Aorta (tissue), 5 donors: ENCODE measurements at regions of chr3 and their contacts with region 1.

Region 1: GRCh38 chr3:141311496-141312353 is 56.6 kb upstream of the ZBTB38 start:
- DNase-seq: peak; percentile 99
- ATAC-seq: peak; percentile 99
- H3K4me3 ChIP-seq: peak overlapping the region; percentile 20 to 27
- H3K27ac ChIP-seq: peak overlapping the region in 1 of 2 donors; percentile 49
- H3K4me1 ChIP-seq: no peaks in the 10 kb centered on the region
- H3K27me3 ChIP-seq: no peaks in the 10 kb centered on the region

Region 2: GRCh38 chr3:141231101-141231935 is 80.4 kb before region 1 on chr3 and contains the start of gene PXYLP1:
- intact Hi-C with region 1: loop called in 1 of 2 experiments (anchors 5 kb)
- DNase-seq: peak; percentile 96 to 98
- ATAC-seq: peak; percentile 98
- H3K4me3 ChIP-seq: peak within 1 kb of the TSS; percentile 58 to 84
- H3K27ac ChIP-seq: peak within 1 kb of the TSS; percentile 45 to 69
- H3K4me1 ChIP-seq: no peaks in the 10 kb centered on the region
- H3K27me3 ChIP-seq: no peaks in the 10 kb centered on the region
- total RNA-seq, gene PXYLP1: 19.2 to 29.6 TPM

Region 3: GRCh38 chr3:141275026-141275910 is 36.5 kb before region 1 on chr3:
- intact Hi-C with region 1: no loop called
- DNase-seq: no peak
- ATAC-seq: no peak
- H3K4me3 ChIP-seq: no peak overlapping the region
- H3K27ac ChIP-seq: no peak overlapping the region
- H3K4me1 ChIP-seq: no peaks in the 10 kb centered on the region
- H3K27me3 ChIP-seq: no peaks in the 10 kb centered on the region

Region 4: DNA sequence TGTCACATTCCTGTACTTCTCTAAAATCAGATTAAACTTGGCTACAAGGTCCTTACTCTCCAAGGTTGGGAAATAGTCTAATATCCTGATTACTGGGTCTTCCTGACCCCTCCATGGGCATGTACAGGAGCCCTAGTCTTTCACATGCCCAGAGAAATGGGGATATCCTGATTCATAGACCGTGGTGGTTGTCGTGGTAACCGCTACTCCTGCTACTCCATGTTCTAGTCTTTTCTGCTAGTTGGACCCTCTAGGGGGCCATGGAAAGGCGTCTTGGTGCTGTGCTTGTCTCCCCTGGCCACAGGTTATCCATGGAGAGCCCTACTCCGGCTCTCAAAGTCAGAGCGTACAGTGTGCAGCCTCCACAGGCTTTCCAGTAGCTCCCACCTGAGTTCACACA is 43.5 kb after region 1 on chr3:
- intact Hi-C with region 1: loop called (anchors 5 kb)
- DNase-seq: no peak
- ATAC-seq: no peak
- H3K4me3 ChIP-seq: no peak overlapping the region
- H3K27ac ChIP-seq: no peak overlapping the region
- H3K4me1 ChIP-seq: no peaks in the 10 kb centered on the region
- H3K27me3 ChIP-seq: no peaks in the 10 kb centered on the region

Region 5: DNA sequence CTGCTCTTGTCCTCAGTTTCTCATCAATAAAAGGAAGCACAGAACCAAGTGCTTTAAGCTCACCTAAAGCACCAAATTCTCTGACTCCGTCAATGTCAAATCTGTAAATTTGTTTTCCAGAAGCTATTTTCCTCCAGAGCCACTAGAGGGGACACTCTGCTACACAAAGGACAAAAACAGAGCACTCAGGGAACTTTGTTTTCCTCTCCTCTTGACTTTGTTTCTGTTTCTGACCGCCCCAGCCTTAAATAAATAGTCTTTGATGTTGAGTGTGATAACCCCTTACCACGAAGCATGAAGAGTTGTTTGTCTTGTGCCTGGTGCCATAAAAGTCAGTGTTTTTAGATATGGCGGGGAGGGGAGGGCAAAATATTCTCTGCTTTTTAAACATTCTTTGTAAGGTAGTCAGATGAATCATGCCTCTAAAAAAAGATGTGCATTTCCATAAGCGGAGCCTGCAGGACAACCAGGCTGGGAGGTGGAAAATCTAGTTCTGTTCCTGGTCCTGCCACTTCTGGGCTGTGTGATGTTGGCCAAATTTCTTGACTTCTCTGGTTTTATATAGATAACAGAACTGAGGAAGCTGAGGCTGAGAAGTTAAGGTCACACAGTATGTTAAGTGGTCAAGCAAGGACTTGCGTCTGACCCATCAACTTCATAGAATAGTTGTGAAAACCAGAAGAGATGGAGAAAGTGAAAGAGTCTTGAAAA is 49.3 kb after region 1 on chr3:
- intact Hi-C with region 1: loop called (anchors 5 kb)
- DNase-seq: peak in 1 of 2 donors; percentile 49
- ATAC-seq: peak; percentile 90
- H3K4me3 ChIP-seq: no peak overlapping the region
- H3K27ac ChIP-seq: peak overlapping the region; percentile 59 to 73
- H3K4me1 ChIP-seq: peaks cover 0 to 4% of the 10 kb centered on the region in 2 donors
- H3K27me3 ChIP-seq: no peaks in the 10 kb centered on the region

Region 6: GRCh38 chr3:141452036-141452435 is 140.3 kb after region 1 on chr3:
- intact Hi-C with region 1: loop called (anchors 2 to 5 kb)
- DNase-seq: no peak
- ATAC-seq: peak; percentile 81
- H3K4me3 ChIP-seq: no peak overlapping the region
- H3K27ac ChIP-seq: peak overlapping the region in 1 of 2 donors; percentile 37
- H3K4me1 ChIP-seq: peaks cover 0 to 3% of the 10 kb centered on the region in 2 donors
- H3K27me3 ChIP-seq: no peaks in the 10 kb centered on the region

Region 7: GRCh38 chr3:141561426-141562034 is 249.8 kb after region 1 on chr3:
- intact Hi-C with region 1: loop called (anchors 5 kb)
- DNase-seq: no peak
- ATAC-seq: peak; percentile 78
- H3K4me3 ChIP-seq: no peak overlapping the region
- H3K27ac ChIP-seq: no peak overlapping the region
- H3K4me1 ChIP-seq: no peaks in the 10 kb centered on the region
- H3K27me3 ChIP-seq: no peaks in the 10 kb centered on the region